ENCODE measurements at regions of chr12 and their contacts with region 1.

Region 1: DNA sequence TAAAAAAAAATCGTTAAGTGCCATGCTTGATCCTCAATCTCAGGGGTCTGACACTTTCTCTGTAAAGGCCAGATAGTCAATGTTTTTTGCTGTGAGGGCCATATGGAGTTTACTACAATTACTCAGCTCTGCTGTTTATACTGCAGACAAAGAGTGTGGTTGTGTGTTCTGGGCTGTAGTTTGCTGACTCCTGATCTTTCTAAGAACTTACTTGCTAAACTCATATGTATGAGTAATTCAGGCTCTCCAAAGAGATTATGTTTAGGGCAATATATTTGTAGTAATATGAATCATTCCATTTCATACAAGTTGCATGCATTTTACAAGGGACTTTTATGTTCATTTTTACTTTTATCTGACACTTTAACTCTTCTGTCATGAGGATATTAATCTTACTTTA is 188.2 kb downstream of the TMTC2 start:
- DNase-seq: no peak
- ATAC-seq: no peak
- H3K4me3 ChIP-seq: no peak overlapping the region
- H3K27ac ChIP-seq: no peak overlapping the region
- H3K4me1 ChIP-seq: no peaks in the 10 kb centered on the region
- CTCF ChIP-seq: no peak
- EP300 ChIP-seq: no peak
- POLR2A ChIP-seq: no peak
- RAD21 ChIP-seq: no peak

Region 2: GRCh38 chr12:82555699-82556098 is 319.2 kb before region 1 on chr12:
- CTCF ChIA-PET with region 1: no interaction called
- POLR2A ChIA-PET with region 1: interaction called, 10 read pairs
- DNase-seq: no peak
- ATAC-seq: no peak
- H3K4me3 ChIP-seq: no peak overlapping the region
- H3K27ac ChIP-seq: no peak overlapping the region
- H3K4me1 ChIP-seq: no peaks in the 10 kb centered on the region
- CTCF ChIP-seq: no peak
- EP300 ChIP-seq: no peak
- POLR2A ChIP-seq: no peak
- RAD21 ChIP-seq: no peak